IMR-90 (cell line): ENCODE measurements at regions of chr14 and their contacts with region 1.

Region 1: DNA sequence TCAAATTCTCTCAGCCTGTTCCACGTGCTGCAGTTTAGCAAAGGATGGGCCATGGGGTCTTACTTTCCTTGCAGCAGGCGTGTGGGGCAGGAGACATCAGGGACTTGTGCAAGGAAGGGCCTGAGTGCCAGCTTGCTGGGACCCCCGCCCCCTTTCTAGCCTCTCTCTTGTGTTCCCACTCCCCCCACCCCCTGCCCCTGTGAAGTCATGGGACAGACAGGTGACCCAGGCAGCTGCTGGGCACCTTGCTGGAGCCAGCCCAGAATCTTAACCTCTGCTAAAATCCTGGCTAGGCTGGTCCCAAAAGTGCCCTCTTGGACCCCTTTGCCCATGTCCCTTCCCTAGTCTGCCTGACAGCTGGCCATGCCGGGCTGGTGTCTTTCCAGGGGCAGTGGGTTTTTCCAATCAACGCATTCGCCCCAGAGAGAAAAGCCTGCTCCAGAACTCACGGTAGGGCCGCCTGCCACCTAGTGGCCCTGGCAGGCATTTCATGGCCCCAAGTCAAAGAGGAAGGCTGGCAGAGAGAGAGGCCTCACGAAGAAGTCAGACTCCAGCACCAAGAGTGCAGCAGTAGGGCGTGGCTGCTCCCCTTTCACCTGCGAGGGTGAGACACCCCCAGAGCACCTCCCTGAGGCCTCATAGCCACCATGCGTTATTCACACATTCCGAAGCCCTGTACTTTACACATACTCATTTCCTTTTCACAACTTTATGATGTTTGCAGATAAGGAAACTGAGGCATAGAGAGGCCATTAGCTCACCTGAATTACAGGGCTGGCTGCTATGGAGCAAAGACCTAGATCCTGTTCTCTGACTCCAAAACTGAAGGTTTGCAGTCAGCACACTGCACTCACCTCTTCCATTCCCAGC is 67.4 kb downstream of the LGMN start:
- DNase-seq: peak; percentile 71
- ATAC-seq: peak; percentile 95
- H3K4me3 ChIP-seq: no peak overlapping the region
- H3K27ac ChIP-seq: no peak overlapping the region
- H3K4me1 ChIP-seq: no peaks in the 10 kb centered on the region
- H3K27me3 ChIP-seq: no peaks in the 10 kb centered on the region
- CTCF ChIP-seq: peak; percentile 91
- POLR2A ChIP-seq: 0 out of 2 replicates have a peak, but pooled peaks have one; percentile 34
- RAD21 ChIP-seq: peak; percentile 95

Region 2: DNA sequence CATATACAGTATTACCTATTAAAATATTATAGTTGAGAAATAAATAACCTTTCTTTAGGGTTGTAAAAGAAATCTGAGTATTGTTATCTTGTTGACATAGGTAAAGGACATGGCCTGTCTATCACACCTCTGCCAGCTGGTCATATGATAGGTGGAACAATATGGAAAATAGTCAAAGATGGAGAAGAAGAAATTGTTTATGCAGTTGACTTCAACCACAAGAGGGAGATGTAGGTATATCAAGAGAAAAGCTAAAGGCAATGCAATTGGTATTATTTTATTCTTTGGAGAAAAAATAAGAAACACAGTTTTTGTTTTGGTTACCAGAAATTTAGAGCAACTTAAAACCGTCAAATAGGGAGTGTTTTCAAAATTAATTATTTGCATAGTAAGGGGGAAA is 545.7 kb before region 1 on chr14:
- CTCF ChIA-PET with region 1: interaction called, 3 read pairs
- POLR2A ChIA-PET with region 1: no interaction called
- dilution Hi-C with region 1: no loop called
- in situ Hi-C with region 1: no loop called
- intact Hi-C with region 1: loop called (anchors 1 kb)
- DNase-seq: peak; percentile 59
- ATAC-seq: peak; percentile 54; the same call in 1 of the 2 replicates
- H3K4me3 ChIP-seq: no peak overlapping the region
- H3K27ac ChIP-seq: no peak overlapping the region
- H3K4me1 ChIP-seq: no peaks in the 10 kb centered on the region
- H3K27me3 ChIP-seq: no peaks in the 10 kb centered on the region
- CTCF ChIP-seq: peak; percentile 70
- POLR2A ChIP-seq: no peak
- RAD21 ChIP-seq: peak; percentile 72

Region 3: GRCh38 chr14:92456215-92457015 is 224.6 kb before region 1 on chr14:
- CTCF ChIA-PET with region 1: no interaction called
- POLR2A ChIA-PET with region 1: no interaction called
- dilution Hi-C with region 1: no loop called
- in situ Hi-C with region 1: no loop called
- intact Hi-C with region 1: loop called (anchors 1 kb)
- DNase-seq: peak; percentile 70
- ATAC-seq: peak; percentile 97
- H3K4me3 ChIP-seq: no peak overlapping the region
- H3K27ac ChIP-seq: no peak overlapping the region
- H3K4me1 ChIP-seq: peaks cover 6% of the 10 kb centered on the region
- H3K27me3 ChIP-seq: no peaks in the 10 kb centered on the region; the same call in 1 of the 2 replicates
- CTCF ChIP-seq: peak; percentile 85
- POLR2A ChIP-seq: no peak
- RAD21 ChIP-seq: peak; percentile 87

Region 4: DNA sequence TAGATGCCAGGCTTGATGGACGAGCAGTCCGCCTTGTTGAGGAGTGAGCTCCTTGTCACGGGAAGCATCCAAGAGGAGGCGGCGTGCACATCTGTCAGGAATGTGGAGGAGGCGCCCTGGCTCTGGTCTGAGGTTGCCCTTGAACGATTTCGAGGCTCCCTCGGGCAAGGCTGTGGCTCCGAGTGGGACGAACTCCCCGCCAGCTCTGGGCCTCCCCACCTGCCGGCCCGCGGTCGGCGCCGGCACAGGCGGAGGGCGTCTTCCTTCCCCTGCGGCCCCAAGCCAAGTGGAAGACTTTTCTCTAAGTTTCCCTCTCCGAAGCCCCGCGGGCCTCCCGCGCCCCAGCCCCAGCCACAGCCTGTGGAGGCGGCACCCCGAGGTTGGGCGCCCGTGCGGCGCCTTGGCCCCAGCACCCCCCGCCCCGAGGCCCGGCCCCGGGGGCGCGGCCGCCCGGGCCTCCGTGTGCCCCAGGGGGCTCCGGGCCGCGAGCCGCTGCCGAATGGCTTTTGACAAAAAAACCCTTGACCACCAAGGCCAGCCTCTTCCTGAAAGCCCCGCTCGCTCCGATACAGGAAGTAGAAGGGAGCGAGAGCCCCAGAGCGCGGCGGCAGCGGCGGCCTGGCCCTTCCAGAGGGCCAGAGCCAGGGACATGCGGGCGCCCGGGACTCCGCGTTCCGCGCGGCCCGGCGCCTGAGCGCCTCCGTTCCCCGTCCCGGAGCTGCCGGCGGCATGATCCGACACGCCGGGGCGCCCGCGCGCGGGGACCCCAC is 167.6 kb before region 1 on chr14 and contains the start of gene RIN3:
- CTCF ChIA-PET with region 1: no interaction called
- POLR2A ChIA-PET with region 1: no interaction called
- dilution Hi-C with region 1: no loop called
- in situ Hi-C with region 1: no loop called
- intact Hi-C with region 1: loop called (anchors 5 kb)
- DNase-seq: peak; percentile 65
- ATAC-seq: peak; percentile 63
- H3K4me3 ChIP-seq: peak within 1 kb of the TSS; percentile 68
- H3K27ac ChIP-seq: peak within 1 kb of the TSS; percentile 82
- H3K4me1 ChIP-seq: peaks cover 13% of the 10 kb centered on the region
- H3K27me3 ChIP-seq: no peaks in the 10 kb centered on the region
- CTCF ChIP-seq: no peak
- POLR2A ChIP-seq: peak; percentile 73
- RAD21 ChIP-seq: no peak
- total RNA-seq, gene RIN3: 2.2 and 2.5 TPM in 2 replicates

Region 5: DNA sequence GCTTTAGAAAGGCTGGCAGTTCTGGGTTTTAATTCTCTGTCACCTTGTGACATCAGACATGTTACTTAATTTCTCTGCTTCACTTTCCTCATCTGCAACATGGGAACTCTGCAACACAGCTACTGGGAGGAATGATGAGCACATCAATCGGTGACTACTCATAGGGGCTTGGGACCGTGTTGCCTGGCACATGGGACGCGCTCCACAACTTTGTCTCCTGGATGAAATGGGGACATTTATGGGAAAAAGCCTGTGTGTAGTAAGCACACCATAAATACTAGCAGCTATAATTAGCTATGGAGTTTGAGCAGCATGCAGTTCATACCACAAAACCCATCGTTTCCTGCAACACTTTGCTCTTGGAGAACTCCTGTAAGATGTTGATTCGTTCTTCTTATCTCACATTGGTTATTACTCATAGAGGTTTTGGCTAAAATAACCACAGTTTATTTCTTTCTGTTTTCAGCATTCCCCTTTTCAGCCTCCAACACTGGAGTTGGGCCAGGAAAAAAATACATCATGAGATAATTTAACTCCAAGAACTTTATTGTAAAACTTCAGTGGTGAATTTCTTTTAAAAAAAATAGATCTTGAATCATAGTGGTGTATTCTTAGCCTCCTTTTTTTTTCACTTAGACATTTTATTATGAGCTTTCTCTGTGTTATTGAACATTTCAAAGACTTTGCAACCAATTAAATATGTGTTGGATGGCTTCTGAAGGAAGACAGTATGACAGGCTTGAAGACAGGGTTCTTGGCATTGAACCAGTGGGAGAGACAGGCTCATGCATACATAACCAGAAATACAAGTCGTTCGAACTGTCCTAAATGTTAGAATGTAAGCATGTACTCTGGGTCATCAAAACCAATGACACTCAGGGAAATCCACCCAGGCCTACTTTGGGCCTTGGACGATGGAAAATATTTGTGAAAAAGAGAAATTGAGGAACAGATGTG is 94.8 kb before region 1 on chr14:
- CTCF ChIA-PET with region 1: interaction called, 3 read pairs
- POLR2A ChIA-PET with region 1: no interaction called
- dilution Hi-C with region 1: no loop called
- in situ Hi-C with region 1: no loop called
- intact Hi-C with region 1: loop called (anchors 2 kb)
- DNase-seq: peak; percentile 99
- ATAC-seq: peak; percentile 95
- H3K4me3 ChIP-seq: no peak overlapping the region
- H3K27ac ChIP-seq: peak overlapping the region; percentile 65
- H3K4me1 ChIP-seq: peaks cover 29% of the 10 kb centered on the region
- H3K27me3 ChIP-seq: no peaks in the 10 kb centered on the region
- CTCF ChIP-seq: no peak
- POLR2A ChIP-seq: no peak
- RAD21 ChIP-seq: peak; percentile 1; the same call in 1 of the 2 replicates

Region 6: DNA sequence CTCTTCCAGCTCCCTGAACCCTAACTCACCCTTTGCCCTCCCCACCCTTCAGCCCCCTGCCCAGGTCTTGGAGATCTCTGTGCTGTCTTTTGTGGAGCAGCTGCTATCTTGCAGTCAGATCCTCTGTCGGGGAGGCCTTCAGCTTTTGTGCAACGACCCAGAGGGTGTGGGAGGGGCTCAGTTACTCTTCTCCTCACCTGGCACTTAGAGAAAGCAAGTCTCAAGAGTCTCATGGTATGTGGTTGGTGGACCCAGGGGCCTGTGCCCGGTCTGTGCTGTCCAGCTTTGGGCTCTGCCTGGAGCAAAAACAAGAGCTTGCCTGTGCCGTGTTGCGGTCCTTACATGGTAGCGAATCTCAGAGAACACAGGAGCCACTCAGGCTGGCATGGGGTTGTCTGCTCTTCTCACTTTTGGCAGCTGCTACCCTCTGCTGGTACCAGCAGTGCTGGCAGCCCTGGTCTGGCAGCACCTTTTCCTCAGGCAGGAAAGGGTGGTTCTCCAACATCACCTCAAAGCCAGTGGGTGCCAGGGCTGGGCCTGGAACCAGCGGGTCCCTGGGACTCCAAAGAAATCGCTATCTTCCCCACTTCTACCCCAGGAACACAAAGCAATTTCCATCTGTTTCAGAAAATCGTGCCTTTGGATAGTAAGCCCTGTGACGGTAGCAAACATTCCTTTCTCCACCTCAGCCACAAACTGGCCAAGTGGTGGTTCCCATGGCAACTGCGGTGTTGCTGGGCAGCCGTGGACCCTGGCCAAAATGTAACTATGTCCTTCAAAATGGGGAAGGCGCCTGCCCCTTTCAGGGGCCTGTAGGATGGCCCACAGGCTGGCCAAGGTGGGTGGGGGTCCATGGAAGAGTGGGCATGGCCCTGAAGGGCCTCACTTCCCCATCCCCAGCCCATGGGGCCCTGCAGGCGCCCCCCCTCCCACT is 77.4 kb before region 1 on chr14:
- CTCF ChIA-PET with region 1: no interaction called
- POLR2A ChIA-PET with region 1: no interaction called
- dilution Hi-C with region 1: no loop called
- in situ Hi-C with region 1: no loop called
- intact Hi-C with region 1: loop called (anchors 5 kb)
- DNase-seq: peak; percentile 83
- ATAC-seq: peak; percentile 5; the same call in 1 of the 2 replicates
- H3K4me3 ChIP-seq: no peak overlapping the region
- H3K27ac ChIP-seq: no peak overlapping the region
- H3K4me1 ChIP-seq: peaks cover 32% of the 10 kb centered on the region
- H3K27me3 ChIP-seq: no peaks in the 10 kb centered on the region
- CTCF ChIP-seq: peak; percentile 32; the same call in 1 of the 2 replicates
- POLR2A ChIP-seq: no peak
- RAD21 ChIP-seq: peak; percentile 51